A549 (cell line): ENCODE measurements at regions of chr1 and their contacts with region 1.

Region 1: GRCh38 chr1:154198756-154199562 is 7.1 kb upstream of the TPM3 start:
- DNase-seq: peak; percentile 73 to 82
- ATAC-seq: peak; percentile 84 to 85
- H3K4me3 ChIP-seq: no peak overlapping the region
- H3K27ac ChIP-seq: no peak overlapping the region
- H3K4me1 ChIP-seq: peaks cover 8% of the 10 kb centered on the region; the same call in 2 of the 3 replicates
- CTCF ChIP-seq: peak; percentile 70
- EP300 ChIP-seq: no peak
- POLR2A ChIP-seq: no peak
- RAD21 ChIP-seq: peak; percentile 63 to 71

Region 2: DNA sequence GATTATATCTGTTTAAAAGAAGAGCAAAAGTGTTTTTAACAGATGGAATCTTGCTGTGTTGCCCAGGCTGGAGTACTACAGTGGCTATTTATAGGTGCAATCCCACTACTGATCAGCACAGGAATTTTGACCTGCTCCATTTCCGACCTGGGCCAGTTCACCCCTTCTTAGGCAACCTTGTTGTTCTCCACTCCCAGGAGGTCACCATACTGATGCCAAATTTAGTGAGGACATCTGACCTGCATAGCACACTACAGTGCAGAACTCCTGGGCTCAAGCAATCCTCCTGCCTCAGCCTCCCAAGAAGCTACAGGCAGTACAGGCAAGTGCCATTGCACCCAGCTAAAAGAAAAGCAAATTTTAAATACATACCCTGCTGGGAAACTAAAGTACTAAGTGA is 32.8 kb before region 1 on chr1:
- CTCF ChIA-PET with region 1: interaction called, 13 read pairs
- POLR2A ChIA-PET with region 1: no interaction called
- DNase-seq: no peak
- ATAC-seq: no peak
- H3K4me3 ChIP-seq: no peak overlapping the region
- H3K27ac ChIP-seq: no peak overlapping the region
- H3K4me1 ChIP-seq: no peaks in the 10 kb centered on the region
- CTCF ChIP-seq: no peak
- EP300 ChIP-seq: no peak
- POLR2A ChIP-seq: no peak
- RAD21 ChIP-seq: no peak

Region 3: GRCh38 chr1:154213274-154213673 is 14.3 kb after region 1 on chr1:
- CTCF ChIA-PET with region 1: interaction called, 22 read pairs
- POLR2A ChIA-PET with region 1: no interaction called
- DNase-seq: peak in 1 of 2 experiments; percentile 43
- ATAC-seq: peak; percentile 55 to 84
- H3K4me3 ChIP-seq: no peak overlapping the region
- H3K27ac ChIP-seq: no peak overlapping the region
- H3K4me1 ChIP-seq: peaks cover 29% of the 10 kb centered on the region; the same call in 2 of the 3 replicates
- CTCF ChIP-seq: no peak
- EP300 ChIP-seq: no peak
- POLR2A ChIP-seq: no peak
- RAD21 ChIP-seq: no peak

Region 4: DNA sequence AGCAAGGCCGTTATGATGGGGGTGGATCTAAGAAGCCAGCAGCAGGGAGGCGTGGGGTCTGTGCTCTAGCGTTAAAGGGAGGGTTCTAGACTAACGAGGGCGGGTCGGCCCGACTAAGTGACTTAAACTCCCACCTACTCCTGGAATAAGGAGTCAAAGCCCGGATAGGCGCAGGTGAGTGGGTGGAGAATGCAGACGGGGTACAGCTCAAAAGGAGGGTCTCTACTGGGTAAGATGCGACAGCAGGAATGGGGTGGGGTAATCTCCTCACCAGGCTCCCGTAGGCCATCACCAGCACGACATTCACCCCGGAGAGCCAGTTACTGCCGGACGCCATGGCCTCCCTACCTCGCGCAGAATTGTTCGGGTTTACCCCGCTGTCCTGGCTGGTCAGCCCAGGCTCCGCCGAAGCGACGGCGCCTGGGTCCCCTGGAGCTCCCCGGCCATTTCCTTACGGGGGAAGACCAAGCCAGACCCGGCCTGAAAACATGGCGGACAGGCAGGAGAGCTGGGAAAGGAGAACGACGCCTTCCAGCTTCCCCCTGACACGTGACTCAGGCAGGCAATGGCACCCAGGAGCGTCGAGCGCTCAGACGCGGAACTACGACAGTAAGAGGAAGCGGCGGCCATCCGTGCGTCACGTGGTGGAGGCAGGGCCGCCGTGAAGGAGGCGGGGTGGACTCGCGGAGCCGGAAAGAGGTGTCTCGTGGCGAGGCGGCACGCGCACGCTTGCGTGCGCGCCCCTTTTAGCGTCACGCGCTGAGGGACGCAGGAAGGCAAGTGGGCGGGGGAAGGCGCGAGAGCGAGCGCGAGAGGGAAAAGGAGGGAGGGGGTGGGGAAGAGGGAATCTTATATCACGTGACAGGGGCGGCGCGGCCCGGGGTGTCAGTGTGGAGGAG is 21.4 kb after region 1 on chr1 and contains the start of gene UBAP2L:
- CTCF ChIA-PET with region 1: interaction called, 14 read pairs
- POLR2A ChIA-PET with region 1: no interaction called
- DNase-seq: peak; percentile 92 to 100
- ATAC-seq: peak; percentile 92 to 95
- H3K4me3 ChIP-seq: peak within 1 kb of the TSS; percentile 98
- H3K27ac ChIP-seq: peak within 1 kb of the TSS; percentile 99 to 100
- H3K4me1 ChIP-seq: peaks cover 45% of the 10 kb centered on the region
- CTCF ChIP-seq: no peak
- EP300 ChIP-seq: no peak
- POLR2A ChIP-seq: peak; percentile 80
- RAD21 ChIP-seq: no peak
- polyA plus RNA-seq, gene UBAP2L: 137 and 169 TPM in 2 replicates

Region 5: DNA sequence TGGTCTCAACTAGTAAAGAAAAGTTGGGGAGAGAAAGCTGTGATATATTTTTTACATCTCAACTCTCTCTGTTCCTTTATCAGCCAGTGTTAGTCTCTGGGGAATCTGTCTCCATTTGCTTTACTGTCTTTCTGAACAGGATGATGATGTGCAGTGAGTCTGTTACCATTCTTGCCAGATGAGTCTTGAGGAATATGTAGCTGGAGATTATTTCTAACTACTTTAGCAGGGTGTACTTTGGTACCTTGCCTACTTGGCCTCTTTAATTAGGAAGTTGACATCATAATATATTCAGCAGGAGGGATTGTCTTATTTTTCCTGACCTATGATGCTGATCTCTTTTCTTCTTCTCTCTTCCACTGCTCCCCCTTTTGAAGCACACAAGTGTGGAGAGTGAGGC is 57.7 kb after region 1 on chr1:
- CTCF ChIA-PET with region 1: interaction called, 17 read pairs
- POLR2A ChIA-PET with region 1: no interaction called
- DNase-seq: no peak
- ATAC-seq: no peak
- H3K4me3 ChIP-seq: no peak overlapping the region
- H3K27ac ChIP-seq: no peak overlapping the region
- H3K4me1 ChIP-seq: no peaks in the 10 kb centered on the region
- CTCF ChIP-seq: no peak
- EP300 ChIP-seq: no peak
- POLR2A ChIP-seq: no peak
- RAD21 ChIP-seq: no peak

Region 6: DNA sequence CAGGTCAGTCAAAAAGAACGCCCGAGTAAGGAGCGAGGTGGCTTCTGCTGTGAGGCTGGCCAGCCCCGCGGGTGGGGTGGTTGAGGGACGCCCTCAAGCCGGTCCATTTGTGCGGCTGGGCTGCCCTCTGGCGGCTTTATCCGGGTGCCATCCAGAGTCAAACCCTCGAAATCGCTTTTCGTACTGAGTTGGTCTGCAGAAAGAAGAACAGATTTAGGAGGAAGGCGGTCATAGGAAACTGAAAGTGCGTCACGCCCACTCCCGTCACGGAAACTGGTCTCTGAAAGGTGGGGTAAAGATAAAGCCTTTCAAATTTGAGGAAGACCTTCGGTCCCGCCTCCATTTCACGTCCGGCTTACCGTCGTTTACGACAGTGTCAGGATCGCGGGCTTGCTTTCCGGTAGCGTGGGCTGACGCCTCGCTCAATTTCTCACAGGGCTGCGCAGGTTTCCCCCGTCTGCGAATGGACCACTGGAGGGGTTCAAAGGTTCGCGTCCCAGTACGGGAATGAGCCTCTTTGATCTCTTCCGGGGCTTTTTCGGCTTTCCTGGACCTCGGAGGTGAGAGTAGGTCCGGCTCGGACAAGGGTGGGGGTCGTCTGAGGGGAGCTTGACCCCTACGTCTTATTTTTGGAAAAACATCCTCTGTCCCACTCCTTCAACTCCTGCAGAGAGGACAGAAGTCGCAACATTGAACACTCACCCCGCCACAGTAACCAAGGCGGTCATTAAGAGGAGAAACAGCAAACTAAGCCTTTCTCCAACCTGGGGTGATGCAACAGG is 73.4 kb after region 1 on chr1 and contains the start of gene HAX1:
- CTCF ChIA-PET with region 1: interaction called, 39 read pairs
- POLR2A ChIA-PET with region 1: no interaction called
- DNase-seq: peak; percentile 93 to 96
- ATAC-seq: peak; percentile 93 to 95
- H3K4me3 ChIP-seq: peak within 1 kb of the TSS; percentile 89
- H3K27ac ChIP-seq: peak within 1 kb of the TSS; percentile 92 to 94
- H3K4me1 ChIP-seq: peaks cover 15% of the 10 kb centered on the region
- CTCF ChIP-seq: peak; percentile 92
- EP300 ChIP-seq: no peak
- POLR2A ChIP-seq: peak; percentile 61
- RAD21 ChIP-seq: peak; percentile 88 to 92
- polyA plus RNA-seq, gene HAX1: 123 and 130 TPM in 2 replicates

Region 7: GRCh38 chr1:154407021-154407655 is 208.2 kb after region 1 on chr1:
- CTCF ChIA-PET with region 1: no interaction called
- POLR2A ChIA-PET with region 1: no interaction called
- DNase-seq: no peak
- ATAC-seq: no peak
- H3K4me3 ChIP-seq: no peak overlapping the region; the same call in 2 of the 3 replicates
- H3K27ac ChIP-seq: peak overlapping the region; percentile 92 to 95; a peak in 5 of 6 replicates
- H3K4me1 ChIP-seq: peaks cover 31% of the 10 kb centered on the region
- CTCF ChIP-seq: no peak
- EP300 ChIP-seq: no peak
- POLR2A ChIP-seq: no peak
- RAD21 ChIP-seq: no peak